Prostate gland (tissue), 2 donors: ENCODE measurements at regions of chr1 and their contacts with region 1.

Region 1: GRCh38 chr1:20093940-20094391 is 24.0 kb downstream of the PLA2G5 start:
- DNase-seq: no peak
- H3K4me3 ChIP-seq: no peak overlapping the region
- H3K27ac ChIP-seq: peak overlapping the region in 1 of 2 donors; percentile 40
- H3K4me1 ChIP-seq: no peaks in the 10 kb centered on the region
- H3K27me3 ChIP-seq: no peaks in the 10 kb centered on the region
- CTCF ChIP-seq: no peak
- POLR2A ChIP-seq: no peak

Region 2: DNA sequence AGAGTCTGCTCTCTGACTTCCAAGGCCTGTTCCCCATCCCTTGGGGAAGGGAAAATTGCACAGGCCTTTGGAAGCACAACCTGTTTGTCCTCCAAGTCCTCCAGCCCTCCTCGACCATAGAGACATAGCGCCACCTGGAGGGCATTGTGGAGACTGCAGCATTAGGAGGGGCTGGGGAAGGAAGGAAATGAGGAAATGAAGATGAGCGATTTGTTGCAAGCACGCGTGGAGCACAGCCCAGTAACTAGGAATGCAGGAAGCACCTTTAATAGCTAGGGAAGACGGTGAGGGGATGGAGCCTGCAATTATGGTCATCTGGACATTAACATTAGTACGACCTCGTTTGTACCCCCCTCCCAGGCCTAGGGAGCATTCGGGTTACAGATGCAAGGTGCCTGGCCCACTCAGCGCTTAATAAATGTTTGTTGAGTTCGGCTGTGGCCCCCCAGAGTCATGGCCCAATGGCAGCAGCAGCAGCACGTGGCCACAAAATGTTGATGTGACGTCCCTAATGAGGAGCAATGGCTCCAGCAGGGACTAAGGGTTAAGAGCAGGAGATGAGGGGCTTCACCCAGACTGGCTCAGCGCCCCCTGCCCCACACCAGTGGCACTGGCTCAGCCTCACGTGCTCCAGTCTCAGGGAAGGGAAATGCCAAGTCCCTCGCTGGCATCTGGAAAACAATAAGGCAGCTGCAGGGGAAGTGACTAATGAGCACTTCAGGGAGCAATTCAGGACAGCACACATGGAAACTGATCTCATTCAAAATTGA is 400.1 kb after region 1 on chr1:
- intact Hi-C with region 1: loop called (anchors 5 kb)
- DNase-seq: peak; percentile 74
- H3K4me3 ChIP-seq: no peak overlapping the region
- H3K27ac ChIP-seq: no peak overlapping the region
- H3K4me1 ChIP-seq: no peaks in the 10 kb centered on the region
- H3K27me3 ChIP-seq: no peaks in the 10 kb centered on the region
- CTCF ChIP-seq: peak; percentile 96 to 99 (median 98)
- POLR2A ChIP-seq: no peak